T-cell (primary cell): ENCODE measurements at regions of chr10 and their contacts with region 1.

Region 1: DNA sequence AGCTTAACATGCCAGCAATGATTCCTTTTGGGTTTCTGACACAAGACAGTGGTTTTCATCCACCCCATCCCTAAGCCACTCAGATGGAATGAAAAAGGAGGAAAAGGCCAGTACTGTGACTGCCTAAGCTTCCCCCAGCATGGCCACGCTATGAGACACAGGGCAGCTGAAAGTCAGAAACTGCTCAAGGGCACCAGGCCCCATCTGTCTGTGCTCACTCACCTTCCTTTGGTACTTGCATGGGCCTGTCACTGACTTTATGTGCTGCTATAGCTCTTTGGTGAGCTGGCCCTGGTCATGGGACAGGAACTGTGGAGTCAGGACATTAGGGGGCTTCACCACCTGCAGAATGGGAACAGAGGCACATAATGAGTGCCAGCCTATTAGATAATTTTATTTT is 21.2 kb upstream of the ACSM6 start:
- DNase-seq: no peak
- ATAC-seq: no peak
- H3K4me3 ChIP-seq: no peak overlapping the region
- H3K4me3 Mint-ChIP-seq: no peak overlapping the region
- H3K27ac ChIP-seq: no peak overlapping the region
- H3K27ac Mint-ChIP-seq: no peak overlapping the region
- H3K4me1 ChIP-seq: no peaks in the 10 kb centered on the region
- H3K4me1 Mint-ChIP-seq: no peaks in the 10 kb centered on the region
- H3K27me3 ChIP-seq: peaks cover 0 to 3% of the 10 kb centered on the region in 2 experiments
- H3K27me3 Mint-ChIP-seq: peaks cover 0 to under 1% of the 10 kb centered on the region in 2 donors

Region 2: GRCh38 chr10:93893646-93894515 is 1279.0 kb before region 1 on chr10 and contains the start of gene SLC35G1:
- CTCF ChIA-PET with region 1: no interaction called
- POLR2A ChIA-PET with region 1: interaction called in 1 of 2 experiments, 11 read pairs
- DNase-seq: peak; percentile 22 to 84 (median 59)
- ATAC-seq: peak; percentile 94 to 96 (median 95)
- H3K4me3 ChIP-seq: peak within 1 kb of the TSS; percentile 69 to 92
- H3K4me3 Mint-ChIP-seq: peak within 1 kb of the TSS; percentile 82 to 84 (median 83)
- H3K27ac ChIP-seq: peak within 1 kb of the TSS; percentile 32
- H3K27ac Mint-ChIP-seq: peak within 1 kb of the TSS in 1 of 2 donors; percentile 81
- H3K4me1 ChIP-seq: peaks cover 13 to 14% of the 10 kb centered on the region in 2 experiments
- H3K4me1 Mint-ChIP-seq: peaks cover 41 to 42% (median 41%) of the 10 kb centered on the region in 3 donors
- H3K27me3 ChIP-seq: peaks cover 0 to 3% of the 10 kb centered on the region in 2 experiments
- H3K27me3 Mint-ChIP-seq: peaks cover 3 to 5% of the 10 kb centered on the region in 2 donors
- total RNA-seq, gene SLC35G1: 4.8 to 6.0 (median 5.3) TPM

Region 3: DNA sequence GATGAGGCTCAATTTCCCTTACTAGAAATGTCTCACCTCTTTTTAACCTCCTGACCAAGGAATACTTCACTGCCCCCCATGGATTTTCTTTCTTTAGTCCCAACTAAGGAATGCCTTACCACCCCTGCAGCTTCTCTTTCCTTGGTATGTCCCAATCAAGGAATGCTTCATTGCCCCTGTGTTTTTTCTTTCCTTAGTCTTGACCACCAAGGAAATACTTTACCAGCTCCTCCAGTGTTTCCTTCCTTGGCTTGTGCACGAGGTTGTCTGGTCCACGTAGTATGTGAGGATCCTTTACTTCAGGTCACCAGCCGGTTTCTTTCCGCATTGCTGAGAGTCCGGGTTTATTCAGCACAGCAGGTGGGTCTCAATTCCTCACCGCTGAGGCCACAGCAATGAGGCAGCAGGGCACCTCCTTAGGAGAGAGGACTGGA is 175.1 kb before region 1 on chr10:
- CTCF ChIA-PET with region 1: no interaction called
- POLR2A ChIA-PET with region 1: no interaction called
- DNase-seq: no peak
- ATAC-seq: no peak
- H3K4me3 ChIP-seq: no peak overlapping the region
- H3K4me3 Mint-ChIP-seq: no peak overlapping the region
- H3K27ac ChIP-seq: no peak overlapping the region
- H3K27ac Mint-ChIP-seq: no peak overlapping the region
- H3K4me1 ChIP-seq: no peaks in the 10 kb centered on the region
- H3K4me1 Mint-ChIP-seq: no peaks in the 10 kb centered on the region
- H3K27me3 ChIP-seq: peaks cover 0 to 3% of the 10 kb centered on the region in 2 experiments
- H3K27me3 Mint-ChIP-seq: no peaks in the 10 kb centered on the region

Region 4: GRCh38 chr10:95187617-95188016 is 14.8 kb after region 1 on chr10:
- CTCF ChIA-PET with region 1: no interaction called
- POLR2A ChIA-PET with region 1: no interaction called
- DNase-seq: no peak
- ATAC-seq: no peak
- H3K4me3 ChIP-seq: no peak overlapping the region
- H3K4me3 Mint-ChIP-seq: no peak overlapping the region
- H3K27ac ChIP-seq: no peak overlapping the region
- H3K27ac Mint-ChIP-seq: no peak overlapping the region
- H3K4me1 ChIP-seq: peaks cover 0 to 7% of the 10 kb centered on the region in 2 experiments
- H3K4me1 Mint-ChIP-seq: peaks cover 6 to 10% (median 8%) of the 10 kb centered on the region in 3 donors
- H3K27me3 ChIP-seq: peaks cover 0 to 18% of the 10 kb centered on the region in 2 experiments
- H3K27me3 Mint-ChIP-seq: peaks cover 17 to 22% of the 10 kb centered on the region in 2 donors

Region 5: GRCh38 chr10:95341716-95342130 is 168.9 kb after region 1 on chr10:
- CTCF ChIA-PET with region 1: no interaction called
- POLR2A ChIA-PET with region 1: no interaction called
- DNase-seq: no peak
- ATAC-seq: no peak
- H3K4me3 ChIP-seq: no peak overlapping the region
- H3K4me3 Mint-ChIP-seq: no peak overlapping the region
- H3K27ac ChIP-seq: no peak overlapping the region
- H3K27ac Mint-ChIP-seq: no peak overlapping the region
- H3K4me1 ChIP-seq: no peaks in the 10 kb centered on the region
- H3K4me1 Mint-ChIP-seq: no peaks in the 10 kb centered on the region
- H3K27me3 ChIP-seq: peaks cover 0 to under 1% of the 10 kb centered on the region in 2 experiments
- H3K27me3 Mint-ChIP-seq: peaks cover 0 to 5% of the 10 kb centered on the region in 2 donors

Region 6: GRCh38 chr10:95363303-95363912 is 190.6 kb after region 1 on chr10:
- CTCF ChIA-PET with region 1: no interaction called
- POLR2A ChIA-PET with region 1: no interaction called
- DNase-seq: peak in 22 of 35 experiments; percentile 4 to 77 (median 21)
- ATAC-seq: peak; percentile 52 to 72 (median 62)
- H3K4me3 ChIP-seq: no peak overlapping the region
- H3K4me3 Mint-ChIP-seq: no peak overlapping the region
- H3K27ac ChIP-seq: no peak overlapping the region
- H3K27ac Mint-ChIP-seq: no peak overlapping the region
- H3K4me1 ChIP-seq: no peaks in the 10 kb centered on the region
- H3K4me1 Mint-ChIP-seq: no peaks in the 10 kb centered on the region
- H3K27me3 ChIP-seq: no peaks in the 10 kb centered on the region
- H3K27me3 Mint-ChIP-seq: peaks cover 6 to 11% of the 10 kb centered on the region in 2 donors